ENCODE measurements at regions of chr1 and their contacts with region 1.

Region 1: DNA sequence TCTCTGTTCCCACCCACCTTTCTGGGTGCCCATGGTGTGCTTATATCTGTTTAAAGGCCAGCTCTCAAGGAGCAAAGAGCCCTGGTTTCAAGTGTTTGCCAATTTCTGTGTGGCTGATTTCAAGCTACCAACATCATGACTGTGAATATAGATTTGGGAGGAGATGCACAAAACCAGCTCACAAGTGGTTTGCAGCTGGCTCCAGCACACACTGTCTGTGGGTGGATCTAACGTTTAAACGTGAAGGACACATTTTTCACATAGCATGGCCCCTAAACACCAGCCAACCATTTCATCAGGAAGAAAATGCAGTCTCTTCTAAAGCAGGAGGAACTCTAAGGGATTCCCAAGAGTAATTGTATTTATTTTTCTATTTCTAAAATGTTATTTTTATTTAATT is 65.2 kb downstream of the FCRL5 start:
- DNase-seq: no peak

Region 2: GRCh38 chr1:156728597-156729462 is 758.3 kb before region 1 on chr1 and contains the start of gene ISG20L2:
- intact Hi-C with region 1: no loop called
- DNase-seq: peak; percentile 98
- total RNA-seq, gene ISG20L2: 12.4 TPM

Region 3: DNA sequence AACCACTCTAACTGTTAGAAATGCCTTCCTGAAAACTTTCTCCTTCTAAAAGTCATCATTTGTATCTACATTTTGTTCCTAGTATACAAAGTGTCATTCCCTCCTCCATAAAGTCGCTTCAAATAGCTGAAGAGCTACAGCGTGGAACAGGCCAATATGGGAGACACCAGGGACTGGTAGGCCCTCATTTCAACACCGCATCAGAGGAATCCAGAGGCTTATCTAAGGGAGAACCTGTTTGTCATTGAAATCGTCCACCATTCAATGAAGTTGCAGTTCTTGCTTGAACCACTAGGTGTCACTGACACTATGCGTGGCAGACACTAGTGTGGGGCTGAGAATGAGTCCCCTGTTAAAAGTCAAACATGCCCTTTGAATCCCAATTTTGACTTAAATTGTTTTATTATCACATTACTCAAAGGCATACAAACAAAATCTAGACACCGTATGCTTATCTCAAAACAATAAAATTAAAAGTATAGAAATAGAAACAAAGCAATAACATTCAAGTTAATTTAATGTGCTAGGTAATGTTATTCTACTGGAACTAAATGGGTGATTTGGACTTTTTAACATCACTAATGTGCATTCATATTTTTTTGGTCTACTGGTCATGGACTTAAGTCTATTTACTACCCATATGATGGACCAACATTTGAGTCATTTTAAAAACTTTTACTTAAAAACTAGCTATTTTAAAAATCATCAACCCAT is 117.1 kb before region 1 on chr1:
- intact Hi-C with region 1: loop called (anchors 5 kb)
- DNase-seq: no peak

Region 4: GRCh38 chr1:157739229-157739901 is 252.3 kb after region 1 on chr1:
- intact Hi-C with region 1: no loop called
- DNase-seq: no peak

Measured in cardiac septum (tissue), 1 donor.